Heart left ventricle (tissue), 16 donors: ENCODE measurements at regions of chr2 and their contacts with region 1.

Region 1: DNA sequence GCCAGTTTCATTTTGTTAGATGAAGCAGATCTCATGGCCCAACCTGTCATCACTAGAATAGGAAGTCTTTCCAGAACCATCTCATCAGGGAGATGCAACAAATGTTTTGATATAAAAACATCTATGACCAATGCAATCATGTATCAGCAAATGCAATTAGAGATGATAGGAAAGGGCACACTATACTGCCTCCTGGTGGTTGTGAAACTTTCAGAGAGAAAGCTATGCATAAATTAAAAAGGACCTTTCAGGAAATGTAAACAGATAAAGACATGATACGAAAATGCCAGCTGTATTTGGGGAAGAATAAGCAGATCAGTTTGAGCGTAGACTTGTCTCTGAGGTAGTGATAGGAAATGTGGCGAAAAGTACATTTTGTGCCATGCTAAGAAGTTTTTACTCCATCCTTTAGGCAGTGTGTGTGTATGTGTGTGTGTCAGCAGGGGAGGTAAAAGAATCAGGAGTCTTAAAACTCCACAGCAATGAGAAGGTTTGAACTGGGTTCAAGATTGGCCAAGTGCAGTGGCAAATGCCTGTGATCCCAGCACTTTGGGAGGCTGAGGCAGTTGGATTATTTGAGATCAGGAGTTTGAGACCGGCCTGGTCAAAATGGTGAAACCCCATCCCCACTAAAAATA is 479.3 kb downstream of the CPS1 start:
- DNase-seq: no peak
- ATAC-seq: no peak
- H3K4me3 ChIP-seq: no peak overlapping the region
- H3K27ac ChIP-seq: no peak overlapping the region
- H3K4me1 ChIP-seq: no peaks in the 10 kb centered on the region
- H3K27me3 ChIP-seq: no peaks in the 10 kb centered on the region
- CTCF ChIP-seq: peak; percentile 26 to 67 (median 38)
- POLR2A ChIP-seq: no peak

Region 2: DNA sequence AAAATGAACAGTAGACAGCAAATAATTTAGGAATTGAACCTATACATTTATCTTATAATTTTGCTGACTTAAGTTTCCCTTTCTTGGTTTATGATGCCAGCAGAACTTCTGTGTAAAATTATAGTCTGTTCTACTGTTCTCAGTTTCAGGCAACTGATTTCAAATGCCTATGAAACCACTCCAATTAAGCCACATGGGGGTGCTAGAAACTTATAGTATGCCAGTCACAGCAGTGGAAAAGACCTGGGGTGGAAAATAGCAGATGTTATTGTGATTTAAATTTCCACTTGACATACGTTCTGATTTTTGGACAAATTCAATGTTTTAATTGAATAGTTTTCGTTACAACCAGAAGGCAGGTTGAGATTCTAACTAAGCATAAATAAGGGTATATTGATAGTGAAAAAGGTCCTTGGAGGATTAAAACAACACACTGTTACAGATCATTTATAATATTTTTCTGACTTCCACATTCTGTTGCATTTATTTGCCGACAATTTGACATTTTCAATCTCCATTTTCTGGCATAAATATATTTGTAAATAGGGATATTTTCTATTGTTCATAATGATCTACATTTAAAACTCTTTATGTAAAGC is 417.8 kb before region 1 on chr2:
- intact Hi-C with region 1: loop called in 1 of 10 experiments (anchors 5 kb)
- DNase-seq: no peak
- ATAC-seq: no peak
- H3K4me3 ChIP-seq: no peak overlapping the region
- H3K27ac ChIP-seq: no peak overlapping the region
- H3K4me1 ChIP-seq: no peaks in the 10 kb centered on the region
- H3K27me3 ChIP-seq: no peaks in the 10 kb centered on the region
- CTCF ChIP-seq: peak; percentile 14 to 62 (median 44)
- POLR2A ChIP-seq: no peak

Region 3: GRCh38 chr2:210654091-210654490 is 381.6 kb before region 1 on chr2:
- intact Hi-C with region 1: loop called in 2 of 10 experiments (anchors 5 to 10 kb)
- DNase-seq: no peak
- ATAC-seq: no peak
- H3K4me3 ChIP-seq: no peak overlapping the region
- H3K27ac ChIP-seq: no peak overlapping the region
- H3K4me1 ChIP-seq: no peaks in the 10 kb centered on the region
- H3K27me3 ChIP-seq: no peaks in the 10 kb centered on the region
- CTCF ChIP-seq: no peak
- POLR2A ChIP-seq: no peak

Region 4: DNA sequence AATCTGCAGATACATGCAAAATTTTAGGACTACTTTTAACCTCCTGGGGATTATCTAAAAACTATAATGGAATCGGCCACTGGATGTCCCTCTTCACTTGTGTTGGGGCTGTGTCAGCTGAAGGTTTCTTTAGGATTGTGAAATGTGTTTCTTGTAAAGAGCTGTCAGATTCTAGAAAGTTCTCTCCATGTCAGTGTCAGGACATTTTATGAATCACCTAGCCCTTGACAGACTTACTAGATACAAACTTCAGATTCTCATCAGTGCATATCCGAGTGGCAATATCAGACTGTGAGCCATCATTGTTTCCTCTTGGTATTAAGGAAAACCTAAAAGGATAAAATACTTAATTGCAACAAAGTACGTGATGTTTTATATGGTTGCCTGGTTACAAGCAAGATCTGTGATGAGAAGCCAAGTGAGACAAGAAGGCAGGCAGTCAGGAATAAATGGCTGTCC is 372.0 kb before region 1 on chr2:
- intact Hi-C with region 1: loop called in 9 of 10 experiments (anchors 2 to 10 kb)
- DNase-seq: no peak
- ATAC-seq: peak in 2 of 4 donors; percentile 45 to 47
- H3K4me3 ChIP-seq: no peak overlapping the region
- H3K27ac ChIP-seq: no peak overlapping the region
- H3K4me1 ChIP-seq: no peaks in the 10 kb centered on the region
- H3K27me3 ChIP-seq: no peaks in the 10 kb centered on the region
- CTCF ChIP-seq: peak in 9 of 12 donors; percentile 17 to 52 (median 41)
- POLR2A ChIP-seq: no peak

Region 5: GRCh38 chr2:210782222-210782621 is 253.4 kb before region 1 on chr2:
- intact Hi-C with region 1: loop called in 1 of 10 experiments (anchors 10 kb)
- DNase-seq: no peak
- ATAC-seq: no peak
- H3K4me3 ChIP-seq: no peak overlapping the region
- H3K27ac ChIP-seq: no peak overlapping the region
- H3K4me1 ChIP-seq: peaks cover 0 to 3% (median 0%) of the 10 kb centered on the region in 12 donors
- H3K27me3 ChIP-seq: no peaks in the 10 kb centered on the region
- CTCF ChIP-seq: peak in 1 of 12 donors; percentile 17
- POLR2A ChIP-seq: no peak